GM12878 (cell line): ENCODE measurements at regions of chr9 and their contacts with region 1.

Region 1: DNA sequence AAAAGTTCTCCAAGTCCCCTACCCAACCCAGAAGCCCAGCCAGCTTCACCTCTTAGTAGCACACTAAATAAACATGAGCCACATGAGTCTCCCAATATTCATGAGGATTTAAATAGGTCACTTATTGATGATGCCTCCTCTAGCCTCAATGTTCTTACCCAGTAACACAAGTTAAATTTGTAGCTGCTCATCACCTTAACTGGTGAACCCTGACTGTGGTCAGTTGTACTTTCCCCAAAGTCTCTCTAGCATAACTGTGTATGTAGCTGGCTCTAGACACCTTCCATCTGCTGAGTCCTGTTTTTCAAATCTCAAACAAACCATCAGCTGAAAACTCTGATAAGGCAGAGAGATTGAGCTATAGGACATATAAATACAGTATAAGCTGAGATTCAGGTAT is 100.3 kb upstream of the ELAVL2 start:
- DNase-seq: peak; percentile 30
- ATAC-seq: peak; percentile 100
- H3K4me3 ChIP-seq: no peak overlapping the region
- H3K27ac ChIP-seq: no peak overlapping the region
- H3K4me1 ChIP-seq: no peaks in the 10 kb centered on the region
- H3K27me3 ChIP-seq: no peaks in the 10 kb centered on the region
- CTCF ChIP-seq: no peak
- EP300 ChIP-seq: no peak
- POLR2A ChIP-seq: no peak
- RAD21 ChIP-seq: no peak

Region 2: DNA sequence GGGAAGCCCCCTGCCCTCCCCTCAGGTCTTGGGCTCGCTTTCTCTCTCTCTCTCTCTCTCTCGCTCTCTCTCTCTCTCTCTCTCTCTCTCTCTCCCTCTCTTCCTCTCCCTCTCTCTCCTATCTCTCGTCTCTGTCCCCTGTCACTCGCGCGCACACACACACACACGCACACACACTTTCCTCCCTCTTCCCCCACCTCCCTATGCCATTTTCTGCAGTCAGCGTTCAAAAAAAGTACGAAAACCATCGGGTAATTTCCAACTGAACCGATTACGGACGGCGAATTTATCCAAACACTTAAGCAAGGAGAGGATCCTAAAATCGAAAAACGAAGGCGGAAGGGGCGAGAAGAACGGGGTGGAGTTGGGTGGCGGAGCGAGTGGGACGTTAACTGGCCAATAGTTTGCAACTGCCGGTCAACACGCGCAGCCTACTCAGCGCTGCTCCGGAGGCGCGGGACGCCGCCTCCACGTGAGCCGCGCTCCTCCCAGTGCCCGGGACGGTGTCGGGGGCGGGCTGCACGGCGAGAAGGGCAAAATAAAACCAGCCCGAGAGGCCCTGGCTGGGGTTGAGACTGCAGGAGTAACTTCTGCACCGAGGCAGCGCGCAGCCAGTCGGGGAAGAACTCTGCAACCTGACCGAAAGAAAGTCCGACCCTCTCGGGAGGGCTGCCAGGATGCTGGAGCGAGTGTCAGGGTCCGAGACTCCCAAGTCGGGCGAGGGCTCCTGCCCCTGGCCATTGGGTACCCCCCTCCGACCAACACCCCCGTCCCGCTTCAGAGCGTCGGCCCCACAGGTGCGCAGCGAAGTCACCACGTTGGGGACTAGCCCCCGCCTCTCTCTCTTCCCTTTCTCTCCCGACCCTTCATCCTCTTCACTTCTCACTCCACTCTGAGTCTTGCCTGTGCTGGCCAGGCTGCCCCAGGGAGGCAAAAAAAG is 75.4 kb before region 1 on chr9:
- CTCF ChIA-PET with region 1: no interaction called
- POLR2A ChIA-PET with region 1: no interaction called
- RAD21 ChIA-PET with region 1: interaction called, 7 read pairs
- SMC1A ChIA-PET with region 1: interaction called, 3 read pairs
- in situ Hi-C with region 1: no loop called
- intact Hi-C with region 1: loop called (anchors 5 kb)
- DNase-seq: no peak
- ATAC-seq: peak; percentile 88
- H3K4me3 ChIP-seq: no peak overlapping the region
- H3K27ac ChIP-seq: no peak overlapping the region
- H3K4me1 ChIP-seq: no peaks in the 10 kb centered on the region
- H3K27me3 ChIP-seq: no peaks in the 10 kb centered on the region
- CTCF ChIP-seq: no peak
- EP300 ChIP-seq: no peak
- POLR2A ChIP-seq: no peak
- RAD21 ChIP-seq: no peak

Region 3: DNA sequence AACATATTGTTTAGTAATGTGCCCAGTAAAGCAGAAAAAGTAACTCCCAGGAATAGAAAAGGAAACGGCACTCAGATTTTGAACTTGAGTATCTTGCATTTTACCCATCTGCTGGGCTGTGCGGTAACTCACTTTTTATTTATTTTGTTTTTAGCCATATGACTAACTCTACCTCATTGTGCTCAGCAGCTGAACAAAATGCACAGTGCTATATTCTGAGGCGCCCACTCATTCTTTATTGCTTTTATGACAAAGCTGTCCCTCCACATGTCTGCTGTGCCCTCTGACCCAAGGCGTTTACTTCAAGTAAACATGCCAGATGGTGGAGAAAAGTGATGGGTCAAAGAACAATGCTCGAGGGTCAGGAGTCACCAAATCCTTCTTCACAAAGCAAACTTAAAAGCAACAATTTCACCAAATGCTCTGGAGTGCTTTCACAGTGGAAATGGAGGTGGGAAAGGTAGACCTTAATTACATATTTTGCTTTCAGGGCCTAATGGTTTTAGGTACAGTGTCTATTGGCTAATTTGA is 114.8 kb after region 1 on chr9:
- CTCF ChIA-PET with region 1: no interaction called
- POLR2A ChIA-PET with region 1: no interaction called
- RAD21 ChIA-PET with region 1: interaction called, 3 read pairs
- SMC1A ChIA-PET with region 1: interaction called, 3 read pairs
- in situ Hi-C with region 1: no loop called
- intact Hi-C with region 1: loop called (anchors 2 kb)
- DNase-seq: no peak
- ATAC-seq: no peak
- H3K4me3 ChIP-seq: no peak overlapping the region
- H3K27ac ChIP-seq: no peak overlapping the region
- H3K4me1 ChIP-seq: no peaks in the 10 kb centered on the region
- H3K27me3 ChIP-seq: no peaks in the 10 kb centered on the region
- CTCF ChIP-seq: no peak
- EP300 ChIP-seq: no peak
- POLR2A ChIP-seq: no peak
- RAD21 ChIP-seq: no peak